Gastrocnemius medialis (tissue), 4 donors: ENCODE measurements at regions of chr7 and their contacts with region 1.

Region 1: GRCh38 chr7:131284702-131285419 is 42.8 kb upstream of the MKLN1 start:
- DNase-seq: peak; percentile 90 to 93
- ATAC-seq: peak; percentile 92 to 94
- H3K4me3 ChIP-seq: peak overlapping the region in 1 of 4 donors; percentile 25
- H3K27ac ChIP-seq: peak overlapping the region; percentile 83 to 97 (median 92)
- H3K4me1 ChIP-seq: peaks cover 23 to 41% of the 10 kb centered on the region in 2 donors
- H3K27me3 ChIP-seq: no peaks in the 10 kb centered on the region
- CTCF ChIP-seq: peak in 1 of 5 experiments; percentile 8
- POLR2A ChIP-seq: no peak

Region 2: DNA sequence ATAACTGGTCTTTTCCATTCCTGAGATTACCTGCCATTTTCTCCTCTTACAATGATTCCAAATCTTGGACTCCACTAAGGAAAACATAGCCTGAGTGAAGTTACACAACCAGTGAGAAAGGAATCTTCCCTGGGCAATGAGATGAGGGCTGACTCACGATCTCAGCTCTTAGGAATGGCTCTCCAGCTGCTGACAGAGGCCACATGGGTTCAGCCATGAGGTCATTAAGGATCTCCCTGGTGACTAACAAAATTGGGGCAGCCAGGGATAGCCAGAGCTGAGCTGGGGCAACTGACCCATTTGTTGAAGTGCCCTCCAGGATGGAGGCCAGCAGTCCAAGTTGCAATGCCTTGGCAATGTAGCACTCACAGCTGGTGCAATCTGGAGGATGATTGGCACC is 35.9 kb before region 1 on chr7:
- in situ Hi-C with region 1: no loop called
- intact Hi-C with region 1: loop called (anchors 1 kb)
- DNase-seq: peak; percentile 95 to 97
- ATAC-seq: peak; percentile 91 to 99
- H3K4me3 ChIP-seq: no peak overlapping the region
- H3K27ac ChIP-seq: peak overlapping the region; percentile 66 to 87 (median 72)
- H3K4me1 ChIP-seq: peaks cover 17 to 33% of the 10 kb centered on the region in 2 donors
- H3K27me3 ChIP-seq: no peaks in the 10 kb centered on the region
- CTCF ChIP-seq: no peak
- POLR2A ChIP-seq: peak in 1 of 2 donors; percentile 24